ENCODE measurements at regions of chr1 and their contacts with region 1.

Region 1: GRCh38 chr1:230104395-230105244 is 37.6 kb downstream of the GALNT2 start:
- DNase-seq: peak; percentile 100
- H3K4me3 Mint-ChIP-seq: peak overlapping the region; percentile 61
- H3K27ac Mint-ChIP-seq: peak overlapping the region; percentile 65
- H3K4me1 Mint-ChIP-seq: peaks cover 67% of the 10 kb centered on the region
- H3K27me3 Mint-ChIP-seq: no peaks in the 10 kb centered on the region
- CTCF ChIP-seq: peak; percentile 4

Region 2: GRCh38 chr1:230073371-230074035 is 31.1 kb before region 1 on chr1:
- CTCF ChIA-PET with region 1: interaction called, 10 read pairs
- POLR2A ChIA-PET with region 1: interaction called, 162 read pairs
- intact Hi-C with region 1: loop called (anchors 2 kb)
- DNase-seq: peak; percentile 88
- H3K4me3 Mint-ChIP-seq: peak overlapping the region; percentile 2
- H3K27ac Mint-ChIP-seq: peak overlapping the region; percentile 72
- H3K4me1 Mint-ChIP-seq: peaks cover 71% of the 10 kb centered on the region
- H3K27me3 Mint-ChIP-seq: no peaks in the 10 kb centered on the region
- CTCF ChIP-seq: no peak

Region 3: GRCh38 chr1:230090194-230090711 is 14.4 kb before region 1 on chr1:
- CTCF ChIA-PET with region 1: interaction called, 49 read pairs
- POLR2A ChIA-PET with region 1: interaction called, 162 read pairs
- intact Hi-C with region 1: no loop called
- DNase-seq: peak; percentile 84
- H3K4me3 Mint-ChIP-seq: peak overlapping the region; percentile 9
- H3K27ac Mint-ChIP-seq: peak overlapping the region; percentile 80
- H3K4me1 Mint-ChIP-seq: peaks cover 76% of the 10 kb centered on the region
- H3K27me3 Mint-ChIP-seq: no peaks in the 10 kb centered on the region
- CTCF ChIP-seq: no peak

Region 4: GRCh38 chr1:230120926-230121381 is 16.3 kb after region 1 on chr1:
- CTCF ChIA-PET with region 1: interaction called, 6 read pairs
- POLR2A ChIA-PET with region 1: interaction called, 57 read pairs
- intact Hi-C with region 1: no loop called
- DNase-seq: peak; percentile 72
- H3K4me3 Mint-ChIP-seq: no peak overlapping the region
- H3K27ac Mint-ChIP-seq: peak overlapping the region; percentile 87
- H3K4me1 Mint-ChIP-seq: peaks cover 54% of the 10 kb centered on the region
- H3K27me3 Mint-ChIP-seq: no peaks in the 10 kb centered on the region
- CTCF ChIP-seq: peak; percentile 74

Region 5: DNA sequence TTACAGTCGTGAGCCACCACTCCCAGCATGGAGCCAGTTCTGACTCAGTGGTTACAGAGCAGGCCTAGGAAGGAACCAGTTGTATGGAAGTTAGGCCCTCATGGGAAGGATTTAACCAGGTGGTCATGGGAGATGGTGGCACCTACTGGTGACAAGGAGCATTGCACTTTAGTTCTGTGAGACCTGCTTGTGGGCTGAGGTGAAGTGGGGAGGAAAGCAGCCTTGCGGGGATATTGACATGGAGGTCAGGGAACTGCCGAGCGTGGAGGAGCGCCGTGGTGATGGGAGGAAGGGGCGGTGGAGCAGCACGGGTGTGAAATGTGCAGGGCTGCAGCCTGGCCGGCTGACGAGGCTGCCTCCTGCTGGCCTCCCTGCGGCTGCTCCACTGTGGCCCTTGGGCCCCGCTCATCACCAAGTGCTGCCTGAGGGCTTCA is 62.8 kb after region 1 on chr1:
- CTCF ChIA-PET with region 1: interaction called, 5 read pairs
- POLR2A ChIA-PET with region 1: no interaction called
- intact Hi-C with region 1: loop called (anchors 5 kb)
- DNase-seq: peak; percentile 77
- H3K4me3 Mint-ChIP-seq: no peak overlapping the region
- H3K27ac Mint-ChIP-seq: no peak overlapping the region
- H3K4me1 Mint-ChIP-seq: peaks cover 29% of the 10 kb centered on the region
- H3K27me3 Mint-ChIP-seq: no peaks in the 10 kb centered on the region
- CTCF ChIP-seq: peak; percentile 89

Region 6: DNA sequence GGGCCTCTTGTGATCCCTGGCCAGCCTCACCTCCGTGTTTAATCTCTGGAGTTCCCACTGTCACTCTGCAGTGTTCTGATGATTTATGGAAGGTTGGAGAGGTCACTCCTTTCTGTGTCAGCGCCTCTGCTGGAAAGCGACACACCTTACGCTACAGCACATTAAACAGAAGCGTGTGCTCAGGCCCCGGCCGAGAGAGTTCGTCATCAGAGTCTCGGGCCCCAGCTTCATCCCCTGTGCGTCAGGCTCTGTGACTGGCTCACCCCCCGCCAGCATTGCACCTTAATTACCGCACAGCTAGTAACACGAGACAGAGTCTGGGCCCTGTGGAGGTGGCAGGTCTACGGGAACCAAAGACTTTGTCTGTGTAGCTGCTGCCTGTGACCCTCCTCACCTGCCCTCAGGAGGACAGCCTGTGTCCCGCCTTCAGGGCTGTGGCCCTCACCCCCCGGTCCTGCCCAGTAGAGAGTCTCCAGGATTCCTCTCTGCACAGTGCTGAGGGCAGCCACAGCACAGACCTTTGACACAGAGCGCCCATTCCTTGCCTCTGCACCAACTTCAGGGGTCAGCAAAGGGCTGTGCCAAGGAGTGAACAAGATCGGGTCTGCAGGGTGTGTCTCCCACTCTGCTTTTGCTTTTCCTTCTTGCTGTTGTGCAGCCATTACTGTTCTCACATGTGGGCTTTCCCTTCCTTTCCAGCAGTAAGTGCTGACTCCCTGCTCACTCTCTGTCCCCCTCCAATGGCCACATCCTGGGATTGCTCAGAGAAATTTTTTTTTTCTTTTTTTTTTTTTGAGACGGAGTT is 163.9 kb after region 1 on chr1:
- CTCF ChIA-PET with region 1: interaction called, 4 read pairs
- POLR2A ChIA-PET with region 1: no interaction called
- intact Hi-C with region 1: loop called (anchors 2 kb)
- DNase-seq: peak; percentile 81
- H3K4me3 Mint-ChIP-seq: no peak overlapping the region
- H3K27ac Mint-ChIP-seq: no peak overlapping the region
- H3K4me1 Mint-ChIP-seq: no peaks in the 10 kb centered on the region
- H3K27me3 Mint-ChIP-seq: no peaks in the 10 kb centered on the region
- CTCF ChIP-seq: peak; percentile 87

Measured in MCF 10A (cell line).